ENCODE measurements at regions of chr10 and their contacts with region 1.

Region 1: DNA sequence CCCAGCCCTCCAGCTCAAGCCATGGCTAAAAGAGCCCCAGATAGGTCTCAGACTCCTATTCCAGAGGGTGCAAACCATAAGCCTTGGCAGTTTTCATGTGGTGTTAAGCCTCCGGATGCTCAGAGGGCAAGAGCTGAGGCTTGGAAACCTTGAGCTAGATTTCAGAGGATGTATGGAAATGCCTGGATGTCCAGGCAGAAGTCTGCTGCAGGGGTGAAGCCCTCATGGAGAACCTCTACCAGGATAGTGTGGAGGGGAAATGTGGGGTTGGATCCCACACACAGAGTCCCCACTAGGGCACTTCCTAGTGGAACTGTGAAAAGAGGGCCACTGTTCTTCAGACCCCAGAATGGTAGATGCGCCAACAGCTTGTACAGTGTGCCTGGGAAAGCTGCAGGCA is 13.2 kb upstream of the HPSE2 start:
- DNase-seq: no peak
- ATAC-seq: no peak
- H3K4me3 ChIP-seq: no peak overlapping the region
- H3K27ac ChIP-seq: no peak overlapping the region
- H3K4me1 ChIP-seq: no peaks in the 10 kb centered on the region
- H3K27me3 ChIP-seq: no peaks in the 10 kb centered on the region
- CTCF ChIP-seq: no peak

Region 2: DNA sequence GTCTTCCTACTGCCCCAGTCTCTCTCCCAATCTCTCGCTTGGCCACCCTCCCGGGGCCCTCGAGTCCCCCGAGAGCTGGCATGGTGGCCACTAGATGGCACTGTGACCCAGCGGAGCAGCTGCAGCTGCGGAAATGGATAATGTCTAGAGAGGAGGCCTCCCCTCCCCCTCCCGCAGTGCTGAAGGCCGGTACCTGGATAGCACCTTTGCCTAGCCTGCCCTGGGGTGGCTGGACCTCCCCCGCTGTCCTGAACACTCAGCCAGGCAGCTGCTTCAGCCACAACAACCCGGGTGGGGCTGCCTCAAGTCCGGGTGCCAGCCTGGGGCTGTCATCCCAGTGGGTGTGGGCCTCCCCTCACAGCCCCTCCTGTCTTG is 1334.0 kb before region 1 on chr10:
- intact Hi-C with region 1: loop called (anchors 2 to 10 kb)
- DNase-seq: peak; percentile 72 to 89
- ATAC-seq: peak; percentile 87 to 95 (median 92)
- H3K4me3 ChIP-seq: peak overlapping the region; percentile 30
- H3K27ac ChIP-seq: no peak overlapping the region
- H3K4me1 ChIP-seq: peaks cover 9% of the 10 kb centered on the region
- H3K27me3 ChIP-seq: peaks cover 0 to 15% (median 0%) of the 10 kb centered on the region in 3 donors
- CTCF ChIP-seq: peak; percentile 90

Region 3: GRCh38 chr10:98242823-98243222 is 1006.0 kb before region 1 on chr10:
- intact Hi-C with region 1: loop called in 1 of 2 experiments (anchors 10 kb)
- DNase-seq: no peak
- ATAC-seq: no peak
- H3K4me3 ChIP-seq: no peak overlapping the region
- H3K27ac ChIP-seq: no peak overlapping the region
- H3K4me1 ChIP-seq: peaks cover 38% of the 10 kb centered on the region
- H3K27me3 ChIP-seq: no peaks in the 10 kb centered on the region
- CTCF ChIP-seq: peak; percentile 48

Region 4: GRCh38 chr10:98467506-98468346 is 781.1 kb before region 1 on chr10:
- intact Hi-C with region 1: loop called (anchors 1 to 5 kb)
- DNase-seq: peak; percentile 60 to 82
- ATAC-seq: peak; percentile 97 to 99 (median 98)
- H3K4me3 ChIP-seq: peak overlapping the region; percentile 71
- H3K27ac ChIP-seq: no peak overlapping the region
- H3K4me1 ChIP-seq: peaks cover 3% of the 10 kb centered on the region
- H3K27me3 ChIP-seq: no peaks in the 10 kb centered on the region
- CTCF ChIP-seq: peak; percentile 83

Measured in psoas muscle (tissue), 8 donors.